Thyroid gland (tissue), 4 donors: ENCODE measurements at regions of chr2 and their contacts with region 1.

Region 1: GRCh38 chr2:27135491-27135955 is 1.1 kb upstream of the PREB start:
- DNase-seq: no peak
- H3K4me3 ChIP-seq: no peak overlapping the region
- H3K27ac ChIP-seq: no peak overlapping the region
- H3K4me1 ChIP-seq: peaks cover 10 to 12% of the 10 kb centered on the region in 2 donors
- H3K27me3 ChIP-seq: no peaks in the 10 kb centered on the region
- CTCF ChIP-seq: no peak
- POLR2A ChIP-seq: no peak

Region 2: GRCh38 chr2:27209621-27210401 is 74.3 kb after region 1 on chr2:
- intact Hi-C with region 1: loop called (anchors 5 kb)
- DNase-seq: no peak
- H3K4me3 ChIP-seq: no peak overlapping the region
- H3K27ac ChIP-seq: no peak overlapping the region
- H3K4me1 ChIP-seq: peaks cover 10 to 14% of the 10 kb centered on the region in 2 donors
- H3K27me3 ChIP-seq: no peaks in the 10 kb centered on the region
- CTCF ChIP-seq: no peak
- POLR2A ChIP-seq: no peak